ENCODE measurements at regions of chr20 and their contacts with region 1.

Region 1: DNA sequence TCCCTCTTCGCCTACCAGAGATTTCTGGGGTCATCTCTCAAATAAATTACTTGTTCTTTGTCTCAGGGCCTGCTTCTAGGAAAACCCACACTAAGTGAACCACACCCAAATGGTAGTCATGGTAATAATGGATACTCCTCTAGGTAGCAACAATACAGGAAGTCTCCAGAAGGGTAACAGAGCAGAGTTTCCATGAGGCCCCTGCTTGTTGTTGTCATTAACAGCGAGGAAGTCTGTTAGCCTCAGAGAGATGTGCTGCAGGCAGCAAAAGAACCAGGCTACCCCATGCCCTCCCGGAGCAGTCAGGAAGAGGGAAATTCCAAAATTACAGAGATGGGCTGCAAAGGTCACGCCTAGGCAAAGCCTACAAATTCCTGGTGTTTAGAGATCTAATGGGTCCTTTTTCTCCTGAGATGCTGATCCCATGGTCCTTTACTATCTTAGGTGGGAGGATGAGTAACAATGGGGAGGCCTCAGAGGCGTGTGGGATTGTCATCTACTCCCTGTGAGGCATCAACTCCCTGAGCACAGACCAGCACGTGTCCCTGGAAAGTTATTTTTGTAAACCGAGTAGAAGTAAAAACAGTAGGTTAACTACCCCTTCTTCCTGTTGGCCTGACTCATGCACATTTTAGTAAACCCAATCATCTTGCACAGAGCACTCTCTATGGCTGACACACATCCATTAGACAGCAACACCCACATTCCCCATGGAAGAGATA is 10.1 kb downstream of the ISM1 start:
- DNase-seq: peak in 6 of 9 experiments; percentile 13 to 74 (median 40)
- ATAC-seq: peak; percentile 92
- H3K4me3 ChIP-seq: no peak overlapping the region
- H3K4me3 Mint-ChIP-seq: peak overlapping the region; percentile 17
- H3K27ac ChIP-seq: peak overlapping the region; percentile 60 to 67
- H3K27ac Mint-ChIP-seq: peak overlapping the region; percentile 93
- H3K4me1 ChIP-seq: peaks cover 42% of the 10 kb centered on the region
- H3K4me1 Mint-ChIP-seq: peaks cover 36% of the 10 kb centered on the region
- H3K27me3 ChIP-seq: no peaks in the 10 kb centered on the region
- H3K27me3 Mint-ChIP-seq: no peaks in the 10 kb centered on the region
- CTCF ChIP-seq: no peak

Region 2: DNA sequence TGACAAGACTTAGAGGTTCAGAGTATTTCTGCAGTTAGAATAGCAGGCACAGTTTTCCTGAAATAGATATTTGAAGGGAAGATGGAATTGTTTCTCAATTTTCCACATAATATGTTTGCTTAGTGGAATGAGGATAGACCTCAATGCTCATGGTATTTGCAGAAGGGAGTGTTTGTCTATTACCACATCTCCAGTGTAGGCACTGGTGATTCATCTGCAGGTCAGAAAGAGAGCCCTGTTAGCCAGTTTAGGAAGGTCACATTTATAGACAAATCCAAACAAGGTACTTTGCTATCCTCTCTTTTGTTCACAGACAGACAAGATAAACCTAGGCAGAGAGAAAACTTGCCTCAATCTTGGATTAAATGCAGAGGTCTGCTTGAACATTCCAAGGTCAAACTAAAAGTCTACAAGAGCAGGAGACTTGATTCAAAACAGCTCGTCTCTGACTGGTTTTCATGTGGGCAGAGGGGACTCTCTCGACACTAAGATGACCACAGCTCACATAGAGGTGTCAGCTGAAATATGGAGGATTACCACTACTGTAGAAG is 12.7 kb after region 1 on chr20:
- CTCF ChIA-PET with region 1: no interaction called
- POLR2A ChIA-PET with region 1: interaction called, 4 read pairs
- intact Hi-C with region 1: loop called in 1 of 2 experiments (anchors 1 kb)
- DNase-seq: no peak
- ATAC-seq: no peak
- H3K4me3 ChIP-seq: no peak overlapping the region
- H3K4me3 Mint-ChIP-seq: no peak overlapping the region
- H3K27ac ChIP-seq: no peak overlapping the region
- H3K27ac Mint-ChIP-seq: no peak overlapping the region
- H3K4me1 ChIP-seq: peaks cover 28% of the 10 kb centered on the region
- H3K4me1 Mint-ChIP-seq: peaks cover 30% of the 10 kb centered on the region
- H3K27me3 ChIP-seq: no peaks in the 10 kb centered on the region
- H3K27me3 Mint-ChIP-seq: no peaks in the 10 kb centered on the region
- CTCF ChIP-seq: no peak

Region 3: DNA sequence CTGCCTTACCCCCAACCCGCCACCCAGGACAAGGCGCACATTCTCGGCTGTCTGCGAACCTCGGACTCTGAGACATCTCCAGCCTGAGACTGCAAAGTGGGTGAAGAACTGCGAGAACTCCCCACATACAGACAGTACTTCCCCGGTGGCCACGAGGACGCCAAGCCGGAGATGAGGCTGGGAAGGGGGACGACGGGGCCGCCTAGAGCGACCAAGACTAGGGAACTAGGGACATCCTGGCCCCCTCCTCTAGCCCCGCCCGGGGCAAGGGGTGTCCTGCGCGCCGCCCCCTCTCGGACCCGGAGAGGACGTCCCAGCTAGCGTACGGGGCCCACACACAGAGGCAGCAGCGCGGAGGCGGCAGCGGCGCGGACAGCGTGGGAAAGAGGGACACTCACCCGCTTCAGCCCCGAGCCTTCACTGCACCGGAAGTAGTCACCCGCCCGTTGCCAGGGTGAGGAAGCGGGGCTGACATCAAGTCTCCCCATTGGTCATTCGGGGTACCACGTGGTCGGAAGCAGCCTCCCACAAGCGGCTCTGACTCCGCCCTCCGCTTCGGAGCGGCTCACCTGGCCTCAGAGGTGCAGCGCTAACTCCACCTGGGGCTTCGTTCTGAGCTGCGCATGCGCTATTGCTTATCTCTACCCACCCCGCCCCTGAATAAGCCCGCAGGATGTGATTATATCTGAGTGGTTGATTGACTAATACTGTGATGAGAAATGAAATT is 407.5 kb after region 1 on chr20 and contains the start of gene TASP1:
- CTCF ChIA-PET with region 1: no interaction called
- POLR2A ChIA-PET with region 1: no interaction called
- intact Hi-C with region 1: loop called (anchors 10 kb)
- DNase-seq: peak; percentile 93 to 98 (median 97)
- ATAC-seq: peak; percentile 99
- H3K4me3 ChIP-seq: peak within 1 kb of the TSS; percentile 75 to 85
- H3K4me3 Mint-ChIP-seq: peak within 1 kb of the TSS; percentile 90
- H3K27ac ChIP-seq: peak within 1 kb of the TSS; percentile 74 to 80
- H3K27ac Mint-ChIP-seq: peak within 1 kb of the TSS; percentile 66
- H3K4me1 ChIP-seq: peaks cover 4% of the 10 kb centered on the region
- H3K4me1 Mint-ChIP-seq: peaks cover 24% of the 10 kb centered on the region
- H3K27me3 ChIP-seq: no peaks in the 10 kb centered on the region
- H3K27me3 Mint-ChIP-seq: peaks cover 7% of the 10 kb centered on the region
- CTCF ChIP-seq: no peak
- total RNA-seq, gene TASP1: 10.7 to 11.5 TPM

Measured in CD8-positive, alpha-beta T cell (primary cell).